ENCODE measurements at regions of chr15 and their contacts with region 1.

Region 1: GRCh38 chr15:58070801-58071418 is 5.4 kb upstream of the ALDH1A2 start:
- DNase-seq: peak; percentile 57
- ATAC-seq: peak; percentile 54; the same call in 1 of the 2 replicates
- H3K4me3 ChIP-seq: no peak overlapping the region
- H3K27ac ChIP-seq: no peak overlapping the region
- H3K4me1 ChIP-seq: peaks cover 0 to 7% of the 10 kb centered on the region in 2 experiments; a peak in 1 of 4 replicates
- H3K27me3 ChIP-seq: no peaks in the 10 kb centered on the region
- CTCF ChIP-seq: peak; percentile 81 to 97 (median 88)
- POLR2A ChIP-seq: no peak
- RAD21 ChIP-seq: peak; percentile 89

Region 2: GRCh38 chr15:57561041-57561711 is 509.7 kb before region 1 on chr15:
- CTCF ChIA-PET with region 1: interaction called, 19 read pairs
- POLR2A ChIA-PET with region 1: no interaction called
- RAD21 ChIA-PET with region 1: interaction called in 1 of 2 experiments, 6 read pairs
- intact Hi-C with region 1: loop called (anchors 2 kb)
- DNase-seq: peak; percentile 55
- ATAC-seq: peak; percentile 92
- H3K4me3 ChIP-seq: no peak overlapping the region
- H3K27ac ChIP-seq: no peak overlapping the region
- H3K4me1 ChIP-seq: peaks cover 0 to 17% of the 10 kb centered on the region in 2 experiments; a peak in 2 of 4 replicates
- H3K27me3 ChIP-seq: no peaks in the 10 kb centered on the region
- CTCF ChIP-seq: peak; percentile 86 to 91 (median 86)
- POLR2A ChIP-seq: no peak
- RAD21 ChIP-seq: peak; percentile 89

Region 3: DNA sequence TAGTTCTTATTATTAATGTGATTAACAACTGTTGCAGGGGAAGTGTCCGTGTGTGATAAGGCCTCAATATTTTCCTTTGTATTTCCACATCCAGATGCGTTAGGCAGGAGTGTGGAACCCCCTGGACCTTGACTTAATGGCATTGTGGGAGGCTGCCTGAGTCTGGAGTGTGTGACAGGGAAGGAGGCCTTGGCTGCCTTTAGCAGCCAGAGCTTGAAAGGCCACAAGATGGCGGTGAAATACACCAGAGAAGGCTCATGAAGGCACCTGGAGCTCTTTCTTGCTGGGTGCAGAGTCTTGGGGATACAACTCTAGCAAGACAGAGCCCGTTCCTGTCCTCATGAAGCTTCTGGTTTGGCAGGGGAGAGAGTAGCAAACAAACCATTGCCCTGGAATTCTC is 327.5 kb before region 1 on chr15:
- CTCF ChIA-PET with region 1: interaction called, 125 read pairs
- POLR2A ChIA-PET with region 1: no interaction called
- RAD21 ChIA-PET with region 1: interaction called, 3 to 6 read pairs
- intact Hi-C with region 1: no loop called
- DNase-seq: no peak
- ATAC-seq: peak; percentile 59; the same call in 1 of the 2 replicates
- H3K4me3 ChIP-seq: no peak overlapping the region
- H3K27ac ChIP-seq: no peak overlapping the region
- H3K4me1 ChIP-seq: no peaks in the 10 kb centered on the region
- H3K27me3 ChIP-seq: no peaks in the 10 kb centered on the region
- CTCF ChIP-seq: peak; percentile 12 to 21 (median 20); a peak in 2 of 6 replicates
- POLR2A ChIP-seq: no peak
- RAD21 ChIP-seq: peak; percentile 49

Region 4: GRCh38 chr15:57866149-57866736 is 204.7 kb before region 1 on chr15:
- CTCF ChIA-PET with region 1: interaction called, 66 read pairs
- POLR2A ChIA-PET with region 1: no interaction called
- RAD21 ChIA-PET with region 1: interaction called in 1 of 2 experiments, 3 read pairs
- intact Hi-C with region 1: loop called (anchors 1 kb)
- DNase-seq: peak; percentile 52
- ATAC-seq: peak; percentile 78
- H3K4me3 ChIP-seq: no peak overlapping the region
- H3K27ac ChIP-seq: no peak overlapping the region
- H3K4me1 ChIP-seq: no peaks in the 10 kb centered on the region
- H3K27me3 ChIP-seq: no peaks in the 10 kb centered on the region
- CTCF ChIP-seq: peak; percentile 63 to 88 (median 86)
- POLR2A ChIP-seq: no peak
- RAD21 ChIP-seq: peak; percentile 60

Region 5: GRCh38 chr15:58086491-58086890 is 15.6 kb after region 1 on chr15:
- CTCF ChIA-PET with region 1: interaction called, 13 read pairs
- POLR2A ChIA-PET with region 1: interaction called, 3 read pairs
- RAD21 ChIA-PET with region 1: no interaction called
- intact Hi-C with region 1: no loop called
- DNase-seq: no peak
- ATAC-seq: no peak
- H3K4me3 ChIP-seq: no peak overlapping the region
- H3K27ac ChIP-seq: no peak overlapping the region
- H3K4me1 ChIP-seq: no peaks in the 10 kb centered on the region
- H3K27me3 ChIP-seq: no peaks in the 10 kb centered on the region
- CTCF ChIP-seq: no peak
- POLR2A ChIP-seq: no peak
- RAD21 ChIP-seq: no peak

Measured in HCT116 (cell line).